ENCODE measurements at regions of chr11 and their contacts with region 1.

Region 1: DNA sequence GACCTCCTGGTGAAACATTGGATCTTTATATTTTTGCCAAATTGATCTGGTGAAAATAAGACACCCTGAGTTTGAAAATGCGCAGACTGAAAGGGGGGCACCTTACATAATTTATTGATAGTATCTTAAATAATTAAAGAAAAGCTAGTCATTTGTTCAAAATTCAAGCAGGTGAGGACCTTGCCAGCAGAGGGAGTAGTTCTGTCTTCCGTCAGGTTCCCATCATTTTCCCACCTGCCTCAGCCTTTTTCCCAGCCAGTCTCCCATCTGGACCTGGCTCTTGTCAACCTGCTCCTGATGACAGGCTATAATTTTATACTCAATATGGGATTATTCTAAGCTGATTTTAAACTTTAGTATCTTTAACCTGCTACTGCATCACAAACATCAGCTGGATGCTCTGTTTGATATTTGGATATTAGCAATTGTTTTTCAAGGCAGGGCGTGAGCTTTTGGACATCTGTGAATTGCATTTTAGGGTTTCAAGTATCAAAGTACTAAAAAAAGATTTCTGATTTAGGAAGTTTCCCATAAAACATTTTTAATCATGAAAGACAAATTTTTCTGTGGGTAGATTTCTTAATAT is 132.0 kb downstream of the ELP4 start:
- DNase-seq: peak; percentile 40
- ATAC-seq: no peak
- H3K4me3 ChIP-seq: no peak overlapping the region
- H3K27ac ChIP-seq: no peak overlapping the region
- H3K4me1 ChIP-seq: no peaks in the 10 kb centered on the region
- H3K27me3 ChIP-seq: no peaks in the 10 kb centered on the region
- CTCF ChIP-seq: peak; percentile 63
- EP300 ChIP-seq: no peak
- POLR2A ChIP-seq: no peak
- RAD21 ChIP-seq: 0 out of 2 replicates have a peak, but pooled peaks have one; percentile 17

Region 2: DNA sequence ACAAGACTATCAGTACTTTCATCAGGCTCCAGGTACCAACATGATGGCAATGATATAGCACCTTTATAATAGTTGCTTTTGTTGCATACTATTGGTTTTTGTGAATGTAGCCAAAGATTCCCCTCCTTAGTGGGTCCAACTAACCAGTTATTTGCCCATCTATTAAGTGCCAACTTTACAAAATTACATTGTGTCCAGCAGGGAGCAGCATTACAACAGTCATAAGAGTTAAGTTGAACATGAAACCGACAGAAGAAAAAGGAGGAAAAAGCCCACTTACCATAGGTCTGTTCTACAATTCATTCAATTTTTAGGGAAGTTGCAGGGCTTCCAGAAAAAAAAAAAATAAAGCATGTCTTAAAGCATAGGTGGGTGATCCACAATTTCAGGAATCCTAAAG is 153.7 kb before region 1 on chr11:
- CTCF ChIA-PET with region 1: no interaction called
- POLR2A ChIA-PET with region 1: no interaction called
- in situ Hi-C with region 1: no loop called
- intact Hi-C with region 1: loop called (anchors 5 kb)
- DNase-seq: peak; percentile 53
- ATAC-seq: peak; percentile 76
- H3K4me3 ChIP-seq: no peak overlapping the region
- H3K27ac ChIP-seq: no peak overlapping the region
- H3K4me1 ChIP-seq: no peaks in the 10 kb centered on the region
- H3K27me3 ChIP-seq: no peaks in the 10 kb centered on the region
- CTCF ChIP-seq: peak; percentile 49
- EP300 ChIP-seq: no peak
- POLR2A ChIP-seq: no peak
- RAD21 ChIP-seq: no peak

Region 3: GRCh38 chr11:31628111-31628510 is 13.5 kb before region 1 on chr11:
- CTCF ChIA-PET with region 1: no interaction called
- POLR2A ChIA-PET with region 1: no interaction called
- in situ Hi-C with region 1: no loop called
- intact Hi-C with region 1: no loop called
- DNase-seq: no peak
- ATAC-seq: no peak
- H3K4me3 ChIP-seq: no peak overlapping the region
- H3K27ac ChIP-seq: no peak overlapping the region
- H3K4me1 ChIP-seq: no peaks in the 10 kb centered on the region
- H3K27me3 ChIP-seq: no peaks in the 10 kb centered on the region
- CTCF ChIP-seq: no peak
- EP300 ChIP-seq: no peak
- POLR2A ChIP-seq: no peak
- RAD21 ChIP-seq: no peak

Region 4: DNA sequence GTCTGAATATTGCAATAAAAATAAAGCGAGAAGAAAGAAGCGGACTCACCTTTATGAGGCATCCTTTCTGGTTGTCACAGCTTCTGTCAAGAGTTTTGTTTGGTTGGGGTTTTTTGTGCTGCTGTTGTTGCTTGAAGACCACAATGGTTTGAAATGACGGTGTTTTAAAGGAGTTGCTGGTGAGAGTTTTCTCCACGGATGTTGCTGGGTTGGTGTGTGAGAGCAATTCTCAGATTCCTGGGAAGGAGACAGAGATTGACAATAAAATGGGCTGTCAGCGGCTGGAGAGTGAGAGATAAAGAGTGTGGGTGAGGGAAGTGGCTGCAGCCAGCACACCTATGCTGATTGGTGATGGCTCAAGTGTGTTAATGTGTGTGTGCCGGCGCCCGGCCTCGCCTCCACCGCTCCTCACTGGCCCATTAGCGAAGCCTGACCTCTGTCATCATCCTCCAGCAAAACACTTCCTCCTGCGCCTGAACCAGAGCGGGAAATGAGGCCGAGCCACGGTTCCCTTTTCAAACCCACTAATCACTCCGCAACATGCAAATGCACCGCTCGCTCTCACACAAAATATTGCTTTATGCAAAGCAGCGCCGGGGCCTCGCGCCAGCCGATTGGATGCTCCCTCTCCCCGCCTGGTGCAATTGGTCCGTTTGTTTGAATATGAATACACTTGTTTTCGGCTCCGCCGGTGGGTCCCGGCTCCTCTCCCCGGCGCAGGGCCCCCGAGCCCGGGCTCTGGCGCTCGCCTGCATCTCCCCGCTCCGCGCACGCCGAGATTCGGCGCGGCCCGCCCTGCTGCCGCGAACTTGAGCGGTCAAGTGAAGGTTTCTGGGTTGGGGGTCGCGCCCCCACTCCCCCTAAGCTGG is 169.4 kb after region 1 on chr11 and contains the start of gene PAX6:
- CTCF ChIA-PET with region 1: no interaction called
- POLR2A ChIA-PET with region 1: no interaction called
- in situ Hi-C with region 1: no loop called
- intact Hi-C with region 1: loop called (anchors 2 kb)
- DNase-seq: peak; percentile 51
- ATAC-seq: peak; percentile 29
- H3K4me3 ChIP-seq: peak within 1 kb of the TSS; percentile 47 to 70 (median 57)
- H3K27ac ChIP-seq: no peak within 1 kb of the TSS
- H3K4me1 ChIP-seq: peaks cover 60% of the 10 kb centered on the region
- H3K27me3 ChIP-seq: peaks cover 27 to 88% of the 10 kb centered on the region in 2 experiments
- CTCF ChIP-seq: no peak
- EP300 ChIP-seq: no peak
- POLR2A ChIP-seq: no peak
- RAD21 ChIP-seq: no peak
- total RNA-seq, gene PAX6: 0.15 TPM in 1 of 2 replicates, not detected in the other

Region 5: GRCh38 chr11:31870609-31871309 is 229.2 kb after region 1 on chr11:
- CTCF ChIA-PET with region 1: interaction called, 9 read pairs
- POLR2A ChIA-PET with region 1: no interaction called
- in situ Hi-C with region 1: loop called (anchors 10 kb)
- intact Hi-C with region 1: loop called (anchors 1 kb)
- DNase-seq: peak; percentile 43
- ATAC-seq: peak; percentile 93
- H3K4me3 ChIP-seq: peak overlapping the region in 1 of 3 experiments; percentile 21; a peak in 1 of 6 replicates
- H3K27ac ChIP-seq: no peak overlapping the region
- H3K4me1 ChIP-seq: peaks cover 4% of the 10 kb centered on the region; the same call in 1 of the 2 replicates
- H3K27me3 ChIP-seq: peaks cover 0 to 23% of the 10 kb centered on the region in 2 experiments; a peak in 1 of 5 replicates
- CTCF ChIP-seq: peak; percentile 85
- EP300 ChIP-seq: no peak
- POLR2A ChIP-seq: no peak
- RAD21 ChIP-seq: peak; percentile 77

Measured in HepG2 (cell line).